ENCODE measurements at regions of chr2 and their contacts with region 1.

Region 1: DNA sequence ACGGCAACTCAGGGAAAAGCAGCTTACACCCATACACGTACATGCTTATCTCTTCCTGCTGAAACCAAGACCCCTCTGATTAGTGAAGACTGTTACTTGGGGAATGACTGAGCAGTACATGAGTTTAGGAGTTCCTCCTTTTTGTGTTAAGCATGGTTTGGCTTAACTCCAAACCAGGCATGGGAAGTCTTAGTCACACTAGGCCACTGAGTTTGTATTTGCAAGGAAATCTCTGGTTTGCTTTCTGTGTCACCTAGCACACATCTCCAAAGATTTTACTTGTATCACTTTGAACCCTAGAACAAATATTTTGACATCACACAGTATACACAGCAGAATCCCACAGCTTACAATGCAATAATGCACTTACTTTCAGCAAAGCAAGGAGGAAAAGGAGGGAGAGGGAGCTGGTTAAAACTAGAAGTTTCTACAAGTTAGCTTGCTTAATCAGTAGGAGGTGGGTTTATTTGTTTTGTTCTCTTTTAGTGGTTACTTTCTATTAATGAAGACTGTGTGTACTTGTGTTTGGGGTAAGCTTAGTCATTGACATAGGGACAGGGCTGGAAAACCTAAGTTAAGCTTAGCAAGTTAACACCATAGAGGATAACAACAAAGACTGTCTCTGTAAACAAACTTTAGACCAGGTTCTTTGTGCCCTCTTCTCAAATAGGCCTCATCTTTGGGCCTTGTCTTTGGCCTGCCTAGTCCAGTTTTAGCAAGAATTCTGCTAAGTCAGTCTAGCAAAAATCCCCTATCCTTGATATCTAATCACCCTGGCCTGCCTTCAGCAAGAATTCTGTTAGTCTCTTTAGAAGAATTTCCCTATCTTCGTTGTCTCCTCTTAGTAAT is 219.4 kb downstream of the MREG start:
- H3K4me3 Mint-ChIP-seq: peak overlapping the region; percentile 20
- H3K27ac Mint-ChIP-seq: peak overlapping the region; percentile 88
- H3K4me1 Mint-ChIP-seq: peaks cover 57% of the 10 kb centered on the region
- H3K27me3 Mint-ChIP-seq: peaks cover 13% of the 10 kb centered on the region

Region 2: DNA sequence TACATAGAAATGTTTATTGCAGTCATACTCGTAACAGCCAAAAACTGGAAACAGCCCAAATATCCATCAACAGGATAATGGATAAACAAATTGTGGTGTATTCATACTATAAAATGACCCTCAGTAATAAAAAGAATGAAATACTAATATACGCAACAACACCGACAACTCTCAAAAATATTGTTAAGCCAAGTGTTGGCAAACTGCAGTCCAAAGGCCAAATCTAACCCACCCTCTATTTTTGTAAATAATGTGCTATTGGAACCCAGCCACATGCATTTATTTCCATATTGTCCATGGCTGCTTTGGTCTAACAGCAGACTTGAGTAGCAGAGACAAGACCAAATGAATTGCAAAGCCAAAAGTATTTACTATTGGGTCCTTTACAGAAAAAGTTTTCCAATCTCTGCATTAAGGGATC is 68.4 kb after region 1 on chr2:
- intact Hi-C with region 1: no loop called
- H3K4me3 Mint-ChIP-seq: no peak overlapping the region
- H3K27ac Mint-ChIP-seq: no peak overlapping the region
- H3K4me1 Mint-ChIP-seq: peaks cover 19% of the 10 kb centered on the region
- H3K27me3 Mint-ChIP-seq: peaks cover 36% of the 10 kb centered on the region

Region 3: DNA sequence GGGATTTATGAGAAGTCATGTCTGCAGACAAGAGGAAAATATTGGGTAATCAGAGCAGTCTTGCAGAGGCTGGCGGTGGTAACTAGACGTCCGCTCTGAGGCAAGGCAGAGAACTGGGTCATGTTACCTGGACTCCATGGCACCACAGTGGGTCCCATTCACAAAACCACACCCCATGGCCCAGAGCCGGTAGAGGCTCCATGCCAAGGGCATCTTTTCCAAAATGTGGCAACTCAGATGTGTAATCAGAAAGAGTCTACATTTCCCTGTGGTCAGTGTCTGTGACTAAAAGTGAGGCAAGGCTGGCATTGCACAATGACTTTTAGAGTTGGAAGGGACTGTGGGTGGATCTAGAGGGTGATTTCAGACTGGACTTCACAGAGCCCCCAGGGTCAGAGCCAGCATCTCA is 106.2 kb after region 1 on chr2:
- intact Hi-C with region 1: loop called (anchors 2 kb)
- H3K4me3 Mint-ChIP-seq: no peak overlapping the region
- H3K27ac Mint-ChIP-seq: peak overlapping the region; percentile 28
- H3K4me1 Mint-ChIP-seq: peaks cover 59% of the 10 kb centered on the region
- H3K27me3 Mint-ChIP-seq: peaks cover under 1% of the 10 kb centered on the region

Measured in dendritic cell treated with granulocyte-macrophage colony-stimulating factor and Interleukin-4, amounts not matched to agents 40 ng/mL and 50 ng/mL, for 4 days (primary cell).